ENCODE measurements at regions of chr4 and their contacts with region 1.

Region 1: DNA sequence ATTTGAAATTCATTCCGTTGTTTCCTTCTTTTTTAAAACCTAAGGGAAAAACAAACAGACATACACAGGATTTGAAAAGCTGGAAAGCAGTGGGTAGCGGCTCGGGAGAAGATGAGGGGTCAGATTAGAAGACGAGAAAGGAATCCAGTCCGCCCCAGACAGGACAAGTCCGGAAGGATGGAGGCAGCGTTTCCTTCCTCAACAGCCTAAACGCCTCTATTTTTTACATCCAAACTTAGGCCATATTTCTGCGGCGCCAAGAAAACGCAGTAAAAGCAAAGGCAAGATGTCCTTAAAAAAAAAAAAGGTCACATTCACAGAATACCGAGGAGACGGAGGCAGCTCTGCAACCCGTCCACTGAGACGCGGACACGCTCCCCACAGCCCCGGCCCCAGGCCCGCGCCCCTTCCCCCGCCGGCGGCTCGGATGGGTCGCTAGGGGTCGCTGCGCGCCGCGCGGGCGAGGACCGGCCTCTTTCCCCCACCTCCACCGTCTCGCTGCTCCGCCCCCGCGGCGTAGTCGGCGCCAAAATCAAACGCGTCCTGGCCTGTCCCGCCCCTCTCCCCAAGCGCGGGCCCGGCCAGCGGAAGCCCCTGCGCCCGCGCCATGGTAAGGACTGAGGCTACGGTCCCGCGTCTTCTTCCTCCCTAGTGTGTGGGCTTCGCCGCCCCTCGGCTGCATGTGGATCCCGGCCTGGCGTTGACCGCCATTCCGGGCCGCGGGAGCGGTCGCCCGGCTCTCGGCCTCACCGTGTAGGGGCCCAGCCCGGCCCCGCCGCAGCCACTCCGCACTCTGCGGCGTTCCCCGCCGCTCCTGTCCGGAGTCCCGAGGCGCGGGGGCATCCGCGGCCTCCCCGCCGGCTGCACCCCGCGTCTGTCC is at the start of gene MND1:
- DNase-seq: peak; percentile 90
- ATAC-seq: peak; percentile 92
- H3K4me3 ChIP-seq: peak within 1 kb of the TSS; percentile 62 to 90 (median 74)
- H3K4me3 Mint-ChIP-seq: peak within 1 kb of the TSS; percentile 95
- H3K27ac ChIP-seq: no peak within 1 kb of the TSS
- H3K27ac Mint-ChIP-seq: peak within 1 kb of the TSS; percentile 33
- H3K4me1 ChIP-seq: peaks cover 25% of the 10 kb centered on the region in 2 donors
- H3K4me1 Mint-ChIP-seq: peaks cover 42% of the 10 kb centered on the region
- H3K27me3 ChIP-seq: no peaks in the 10 kb centered on the region
- H3K27me3 Mint-ChIP-seq: no peaks in the 10 kb centered on the region
- CTCF ChIP-seq: peak; percentile 98
- total RNA-seq, gene MND1: not detected in 2 replicates

Region 2: GRCh38 chr4:153221783-153222706 is 122.3 kb before region 1 on chr4:
- CTCF ChIA-PET with region 1: no interaction called
- POLR2A ChIA-PET with region 1: no interaction called
- intact Hi-C with region 1: no loop called
- DNase-seq: peak; percentile 62
- ATAC-seq: peak; percentile 32
- H3K4me3 ChIP-seq: peak overlapping the region; percentile 2 to 84 (median 67)
- H3K4me3 Mint-ChIP-seq: peak overlapping the region; percentile 92
- H3K27ac ChIP-seq: peak overlapping the region in 1 of 2 donors; percentile 48
- H3K27ac Mint-ChIP-seq: peak overlapping the region; percentile 67
- H3K4me1 ChIP-seq: peaks cover 11 to 18% of the 10 kb centered on the region in 2 donors
- H3K4me1 Mint-ChIP-seq: peaks cover 35% of the 10 kb centered on the region
- H3K27me3 ChIP-seq: peaks cover 0 to 3% (median 0%) of the 10 kb centered on the region in 4 experiments
- H3K27me3 Mint-ChIP-seq: no peaks in the 10 kb centered on the region
- CTCF ChIP-seq: no peak

Region 3: GRCh38 chr4:153257151-153257620 is 87.2 kb before region 1 on chr4:
- CTCF ChIA-PET with region 1: no interaction called
- POLR2A ChIA-PET with region 1: no interaction called
- intact Hi-C with region 1: no loop called
- DNase-seq: peak; percentile 20
- ATAC-seq: peak; percentile 17
- H3K4me3 ChIP-seq: no peak overlapping the region
- H3K4me3 Mint-ChIP-seq: no peak overlapping the region
- H3K27ac ChIP-seq: no peak overlapping the region
- H3K27ac Mint-ChIP-seq: no peak overlapping the region
- H3K4me1 ChIP-seq: peaks cover 7 to 9% of the 10 kb centered on the region in 2 donors
- H3K4me1 Mint-ChIP-seq: peaks cover 4% of the 10 kb centered on the region
- H3K27me3 ChIP-seq: peaks cover 0 to 22% (median 16%) of the 10 kb centered on the region in 4 experiments
- H3K27me3 Mint-ChIP-seq: peaks cover 26% of the 10 kb centered on the region
- CTCF ChIP-seq: no peak

Region 4: DNA sequence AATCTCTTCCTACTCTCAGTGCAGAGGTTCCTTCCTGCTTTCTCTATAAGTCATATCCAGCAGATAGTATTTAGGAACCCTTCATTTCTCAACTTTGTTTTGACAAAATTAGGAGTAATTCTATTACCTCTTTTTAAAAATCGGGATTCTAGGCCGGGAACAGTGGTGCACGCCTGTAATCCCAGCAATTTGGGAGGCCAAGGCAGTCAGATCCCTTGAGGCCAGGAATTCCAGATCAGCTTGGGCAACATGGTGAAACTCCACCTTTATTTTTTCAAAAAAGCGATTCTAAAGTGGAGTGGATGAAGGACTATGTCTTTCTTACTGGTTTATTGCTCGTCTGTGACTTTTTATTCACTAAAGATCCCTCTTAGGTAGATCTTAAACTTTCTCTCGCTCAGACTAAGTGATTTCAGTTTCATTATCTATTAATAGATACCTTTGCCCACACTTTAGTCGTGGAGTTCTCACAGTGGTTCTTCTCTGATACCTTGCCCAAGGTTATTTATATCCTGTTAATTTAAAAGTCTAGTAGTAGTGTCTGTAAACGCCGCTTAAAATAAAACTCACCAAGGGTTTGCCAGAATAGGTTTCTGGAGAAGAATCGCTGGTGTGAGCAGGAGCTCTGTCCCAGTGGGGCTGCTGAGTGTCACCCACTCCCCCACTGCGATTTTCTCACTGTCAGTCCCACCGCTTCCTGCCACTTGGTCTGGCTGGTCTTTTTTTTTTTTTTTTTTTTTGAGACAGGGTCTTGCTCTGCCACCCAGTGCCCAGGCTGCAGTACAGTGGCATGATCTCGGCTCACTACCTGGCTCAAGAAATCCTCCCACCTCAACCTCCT is 94.8 kb after region 1 on chr4:
- CTCF ChIA-PET with region 1: interaction called, 4 read pairs
- POLR2A ChIA-PET with region 1: no interaction called
- intact Hi-C with region 1: loop called (anchors 1 kb)
- DNase-seq: peak; percentile 79
- ATAC-seq: peak; percentile 68
- H3K4me3 ChIP-seq: peak overlapping the region; percentile 44 to 81 (median 59)
- H3K4me3 Mint-ChIP-seq: peak overlapping the region; percentile 75
- H3K27ac ChIP-seq: peak overlapping the region; percentile 93 to 97
- H3K27ac Mint-ChIP-seq: peak overlapping the region; percentile 74
- H3K4me1 ChIP-seq: peaks cover 50 to 60% of the 10 kb centered on the region in 2 donors
- H3K4me1 Mint-ChIP-seq: peaks cover 59% of the 10 kb centered on the region
- H3K27me3 ChIP-seq: no peaks in the 10 kb centered on the region
- H3K27me3 Mint-ChIP-seq: no peaks in the 10 kb centered on the region
- CTCF ChIP-seq: no peak

Region 5: DNA sequence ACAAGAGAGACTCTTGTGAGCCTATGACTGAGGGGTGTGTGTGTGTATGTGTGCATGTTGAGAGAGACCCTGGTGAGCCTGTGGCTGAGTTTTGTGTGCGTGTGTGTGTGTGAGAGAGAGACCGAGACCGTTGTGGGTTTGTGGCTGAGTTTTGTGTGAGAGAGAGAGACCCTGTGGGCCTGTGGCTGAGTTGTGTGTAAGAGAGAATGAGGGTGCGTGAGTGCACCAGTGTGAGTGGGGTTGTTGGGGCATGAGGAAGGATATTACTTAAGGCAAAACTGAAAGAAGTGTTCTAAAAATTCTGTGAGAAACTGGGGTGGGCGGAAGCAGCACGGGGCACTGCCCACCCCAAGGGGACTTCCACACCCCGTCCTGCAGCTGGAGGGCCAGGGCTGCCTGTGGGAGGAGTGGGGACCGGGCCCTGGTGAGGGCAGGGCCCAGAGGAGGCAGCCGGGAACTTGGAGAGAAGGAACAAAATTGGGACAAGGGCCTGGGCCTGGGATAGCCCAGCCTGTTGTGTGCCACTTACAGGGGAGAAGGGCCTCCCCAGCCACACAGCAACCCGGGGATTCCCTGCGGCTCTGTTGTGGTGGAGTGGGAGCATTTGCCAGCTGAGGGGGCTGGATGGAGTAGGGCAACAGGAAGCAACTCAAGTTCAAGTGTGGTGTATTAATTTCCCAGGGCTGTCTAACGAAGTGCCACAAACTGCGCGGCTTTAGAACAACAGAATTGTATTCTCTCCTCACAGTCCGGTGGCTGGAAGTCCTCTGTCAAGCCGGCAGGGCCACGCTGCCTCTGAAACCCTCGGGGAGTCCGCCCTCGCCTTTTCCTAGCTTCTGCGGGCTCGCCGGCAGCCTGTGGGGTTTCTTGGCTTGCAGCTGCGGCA is 143.9 kb after region 1 on chr4:
- CTCF ChIA-PET with region 1: no interaction called
- POLR2A ChIA-PET with region 1: no interaction called
- intact Hi-C with region 1: loop called (anchors 5 kb)
- DNase-seq: peak; percentile 86
- ATAC-seq: peak; percentile 72
- H3K4me3 ChIP-seq: peak overlapping the region; percentile 40 to 65 (median 51)
- H3K4me3 Mint-ChIP-seq: peak overlapping the region; percentile 87
- H3K27ac ChIP-seq: peak overlapping the region; percentile 96 to 98
- H3K27ac Mint-ChIP-seq: peak overlapping the region; percentile 97
- H3K4me1 ChIP-seq: peaks cover 85 to 90% of the 10 kb centered on the region in 2 donors
- H3K4me1 Mint-ChIP-seq: peaks cover 85% of the 10 kb centered on the region
- H3K27me3 ChIP-seq: no peaks in the 10 kb centered on the region
- H3K27me3 Mint-ChIP-seq: no peaks in the 10 kb centered on the region
- CTCF ChIP-seq: no peak

Region 6: DNA sequence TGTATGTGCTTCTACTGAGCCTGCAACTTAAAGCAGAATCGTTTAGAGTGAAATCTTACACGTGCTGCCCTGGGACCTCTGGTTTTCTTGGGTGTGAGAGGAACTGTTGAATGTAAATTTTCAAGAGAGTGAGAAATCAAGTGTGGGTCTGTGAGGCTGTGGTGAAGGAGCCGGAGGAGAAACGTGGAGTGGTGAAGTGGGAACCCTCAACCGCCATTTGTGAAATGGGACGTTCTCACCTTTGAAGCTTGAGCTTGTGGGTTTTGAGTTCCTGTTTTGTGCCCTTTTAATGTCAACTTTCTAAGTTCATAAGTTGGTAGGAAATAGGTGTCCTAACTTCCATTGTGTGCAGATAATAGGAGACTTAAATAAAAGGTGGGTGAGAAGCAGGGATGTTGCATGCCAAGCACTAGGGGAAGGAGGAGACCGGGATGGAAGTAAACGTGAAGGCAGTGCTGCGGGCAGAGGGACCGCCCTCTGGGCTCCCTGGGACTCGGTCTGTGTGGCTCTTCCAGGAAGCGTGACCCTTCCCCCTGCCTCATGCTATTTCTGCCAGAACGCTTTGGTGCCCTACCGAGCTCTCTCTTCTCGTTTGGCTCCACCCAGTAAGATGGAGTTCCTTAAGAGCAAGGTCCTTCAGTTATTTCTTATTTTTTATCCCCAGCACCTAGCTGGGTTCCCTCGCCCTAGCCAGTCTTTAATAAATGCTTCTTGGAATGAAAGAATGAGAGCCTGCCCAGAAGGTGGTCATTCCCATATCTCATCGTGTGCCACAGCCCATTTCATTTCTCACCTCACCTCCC is 177.8 kb after region 1 on chr4:
- CTCF ChIA-PET with region 1: interaction called, 3 read pairs
- POLR2A ChIA-PET with region 1: no interaction called
- intact Hi-C with region 1: loop called (anchors 5 kb)
- DNase-seq: peak; percentile 66
- ATAC-seq: peak; percentile 29
- H3K4me3 ChIP-seq: peak overlapping the region in 3 of 5 experiments; percentile 14 to 51 (median 17)
- H3K4me3 Mint-ChIP-seq: peak overlapping the region; percentile 82
- H3K27ac ChIP-seq: peak overlapping the region; percentile 61 to 87
- H3K27ac Mint-ChIP-seq: peak overlapping the region; percentile 88
- H3K4me1 ChIP-seq: peaks cover 91 to 96% of the 10 kb centered on the region in 2 donors
- H3K4me1 Mint-ChIP-seq: peaks cover 96% of the 10 kb centered on the region
- H3K27me3 ChIP-seq: no peaks in the 10 kb centered on the region
- H3K27me3 Mint-ChIP-seq: no peaks in the 10 kb centered on the region
- CTCF ChIP-seq: no peak

Region 7: GRCh38 chr4:153643406-153644383 is 299.3 kb after region 1 on chr4:
- CTCF ChIA-PET with region 1: interaction called, 25 read pairs
- POLR2A ChIA-PET with region 1: no interaction called
- intact Hi-C with region 1: loop called (anchors 1 kb)
- DNase-seq: peak; percentile 80
- ATAC-seq: peak; percentile 96
- H3K4me3 ChIP-seq: no peak overlapping the region
- H3K4me3 Mint-ChIP-seq: no peak overlapping the region
- H3K27ac ChIP-seq: no peak overlapping the region
- H3K27ac Mint-ChIP-seq: no peak overlapping the region
- H3K4me1 ChIP-seq: no peaks in the 10 kb centered on the region
- H3K4me1 Mint-ChIP-seq: peaks cover 8% of the 10 kb centered on the region
- H3K27me3 ChIP-seq: no peaks in the 10 kb centered on the region
- H3K27me3 Mint-ChIP-seq: no peaks in the 10 kb centered on the region
- CTCF ChIP-seq: peak; percentile 81

Region 8: GRCh38 chr4:153750197-153750817 is 405.9 kb after region 1 on chr4:
- CTCF ChIA-PET with region 1: interaction called, 20 read pairs
- POLR2A ChIA-PET with region 1: no interaction called
- intact Hi-C with region 1: loop called (anchors 1 kb)
- DNase-seq: peak; percentile 75
- ATAC-seq: peak; percentile 68
- H3K4me3 ChIP-seq: no peak overlapping the region
- H3K4me3 Mint-ChIP-seq: no peak overlapping the region
- H3K27ac ChIP-seq: no peak overlapping the region
- H3K27ac Mint-ChIP-seq: no peak overlapping the region
- H3K4me1 ChIP-seq: peaks cover 0 to 10% of the 10 kb centered on the region in 2 donors
- H3K4me1 Mint-ChIP-seq: no peaks in the 10 kb centered on the region
- H3K27me3 ChIP-seq: peaks cover 0 to 10% (median 3%) of the 10 kb centered on the region in 4 experiments
- H3K27me3 Mint-ChIP-seq: peaks cover 9% of the 10 kb centered on the region
- CTCF ChIP-seq: peak; percentile 87

Measured in B cell (primary cell).